ENCODE measurements at regions of chr11 and their contacts with region 1.

Region 1: GRCh38 chr11:32176223-32176934 is 85.5 kb downstream of the RCN1 start:
- DNase-seq: peak in 2 of 3 donors; percentile 54 to 91
- ATAC-seq: peak; percentile 81
- H3K4me3 ChIP-seq: no peak overlapping the region
- H3K4me1 ChIP-seq: no peaks in the 10 kb centered on the region
- CTCF ChIP-seq: peak; percentile 76

Region 2: GRCh38 chr11:32052218-32052617 is 124.2 kb before region 1 on chr11:
- intact Hi-C with region 1: loop called (anchors 2 to 5 kb)
- DNase-seq: peak in 2 of 3 donors; percentile 31 to 68
- ATAC-seq: peak; percentile 47
- H3K4me3 ChIP-seq: no peak overlapping the region
- H3K4me1 ChIP-seq: no peaks in the 10 kb centered on the region
- CTCF ChIP-seq: no peak

Measured in mucosa of descending colon (tissue), 3 donors.